OCI-LY7 (cell line): ENCODE measurements at regions of chr1 and their contacts with region 1.

Region 1: DNA sequence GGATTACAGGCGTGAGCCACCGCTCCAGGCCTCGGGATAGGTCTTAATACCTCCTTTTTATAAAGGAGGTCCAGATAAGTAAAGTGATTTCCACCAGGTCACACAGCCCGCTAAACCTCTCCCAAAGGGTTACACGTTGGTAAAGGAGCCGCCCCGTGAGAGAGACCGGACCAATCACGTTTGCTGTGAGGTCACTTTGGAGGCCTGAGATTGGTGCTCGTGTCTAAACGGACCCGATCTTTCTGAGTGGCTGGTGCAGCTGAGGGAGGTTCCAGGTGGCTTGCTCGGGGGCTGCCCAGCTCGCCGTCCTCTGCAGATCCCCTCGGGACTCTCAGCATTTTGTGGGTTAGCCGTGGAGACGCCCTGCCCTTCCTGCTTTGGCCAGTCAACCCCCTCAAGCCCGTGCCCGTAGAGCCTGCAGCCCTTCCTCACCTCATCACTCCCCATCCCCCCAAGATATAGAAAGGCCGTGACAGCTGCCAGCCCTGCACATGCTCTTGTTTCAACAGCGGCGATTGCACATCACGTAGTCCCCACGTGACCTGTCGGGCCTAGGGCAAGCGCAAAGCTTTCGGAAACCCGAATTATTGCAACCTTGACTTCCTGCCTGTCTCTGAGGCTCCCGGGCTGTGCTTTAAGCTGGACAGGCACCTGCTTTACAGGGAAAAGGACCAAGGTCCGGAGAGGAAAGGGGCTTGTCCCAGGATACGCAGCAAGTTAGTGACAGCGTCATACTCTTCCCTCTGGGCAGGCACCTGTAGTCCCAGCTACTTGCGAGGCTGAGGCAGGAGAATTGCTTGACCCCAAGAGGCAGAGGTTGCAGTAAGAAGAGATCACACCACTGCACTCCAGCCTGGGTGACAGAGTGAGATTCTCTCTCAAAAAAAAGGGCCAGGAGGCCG is 5.0 kb upstream of the COA7 start:
- DNase-seq: peak; percentile 89
- H3K4me3 ChIP-seq: peak overlapping the region; percentile 62
- H3K27ac ChIP-seq: no peak overlapping the region
- H3K4me1 ChIP-seq: peaks cover 20% of the 10 kb centered on the region
- CTCF ChIP-seq: no peak

Region 2: DNA sequence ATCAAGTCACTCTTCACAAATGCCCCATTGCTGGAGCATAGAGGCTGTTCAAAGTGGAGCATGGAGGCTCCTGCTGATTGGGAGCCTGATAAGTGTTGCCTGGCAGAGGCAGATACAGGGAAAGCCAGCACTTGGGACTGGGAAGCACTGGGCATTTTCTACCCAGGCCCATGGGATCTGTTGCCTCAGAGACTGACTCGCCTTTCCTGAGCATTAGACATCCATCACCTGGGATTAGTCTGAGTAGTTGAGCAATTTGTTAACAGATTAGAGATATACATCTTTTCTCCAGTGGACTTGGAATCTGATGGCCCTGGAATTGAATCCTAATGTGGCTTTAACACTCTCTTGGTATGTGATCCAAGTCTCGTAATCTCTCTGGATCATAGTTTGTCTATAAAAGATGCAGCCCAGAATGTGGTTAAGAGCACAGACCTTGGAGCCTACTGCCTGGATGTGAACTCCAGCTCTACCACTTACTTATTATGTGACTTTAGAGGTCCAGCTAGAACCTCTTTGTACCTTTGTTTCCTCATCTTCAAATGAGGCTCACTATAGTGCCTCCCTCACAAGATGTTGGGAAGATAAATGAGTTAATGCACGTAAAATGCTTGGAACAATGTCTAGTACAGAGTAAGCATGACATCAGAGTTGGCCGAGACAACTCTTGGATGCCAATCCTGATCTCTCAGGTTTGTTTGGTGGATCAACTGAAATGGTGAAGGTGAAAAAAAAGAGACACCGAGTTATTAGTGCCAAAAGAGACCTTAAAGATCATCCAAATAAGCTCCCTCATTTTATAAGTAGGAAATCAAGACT is 786.3 kb before region 1 on chr1:
- CTCF ChIA-PET with region 1: no interaction called
- POLR2A ChIA-PET with region 1: no interaction called
- intact Hi-C with region 1: no loop called
- DNase-seq: no peak
- H3K4me3 ChIP-seq: no peak overlapping the region
- H3K27ac ChIP-seq: no peak overlapping the region
- H3K4me1 ChIP-seq: no peaks in the 10 kb centered on the region
- CTCF ChIP-seq: no peak

Region 3: DNA sequence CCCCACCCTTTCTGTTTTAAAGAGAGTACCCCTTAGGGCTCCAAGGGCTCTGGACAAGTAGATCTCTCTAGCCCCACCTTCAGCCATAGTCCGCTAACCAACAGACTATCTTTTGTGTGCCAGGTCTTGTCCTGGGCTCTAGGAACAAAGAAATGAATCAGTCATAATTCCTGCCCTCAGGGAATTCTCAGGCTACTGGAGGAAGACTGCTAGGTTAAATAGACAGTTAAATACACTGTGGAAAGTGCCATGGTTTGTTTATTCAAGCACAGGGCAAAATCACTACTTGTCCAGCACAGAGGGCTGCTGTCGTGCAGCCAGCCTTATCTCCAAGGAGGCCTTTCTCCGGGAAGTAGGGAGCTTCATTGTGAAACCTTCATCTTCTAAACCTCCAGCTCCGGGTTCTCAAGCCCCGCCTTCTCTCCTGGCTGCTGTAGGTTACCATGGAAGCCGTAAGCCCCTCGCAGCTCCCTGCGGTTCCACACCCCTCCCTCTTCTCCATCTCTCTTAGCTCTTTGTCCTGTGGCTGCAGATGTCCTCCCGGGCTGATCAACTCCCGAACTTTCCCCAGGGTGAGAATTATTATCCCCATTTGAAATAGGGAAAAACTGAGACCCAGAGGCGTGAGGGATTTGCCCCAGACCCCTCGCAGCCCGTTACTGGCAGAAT is 40.4 kb before region 1 on chr1:
- CTCF ChIA-PET with region 1: no interaction called
- POLR2A ChIA-PET with region 1: no interaction called
- intact Hi-C with region 1: no loop called
- DNase-seq: no peak
- H3K4me3 ChIP-seq: no peak overlapping the region
- H3K27ac ChIP-seq: no peak overlapping the region
- H3K4me1 ChIP-seq: no peaks in the 10 kb centered on the region
- CTCF ChIP-seq: no peak

Region 4: GRCh38 chr1:52726265-52727113 is 23.4 kb after region 1 on chr1 and contains the start of gene ZYG11B:
- CTCF ChIA-PET with region 1: no interaction called
- POLR2A ChIA-PET with region 1: interaction called, 6 read pairs
- intact Hi-C with region 1: loop called (anchors 2 kb)
- DNase-seq: peak; percentile 91
- H3K4me3 ChIP-seq: peak within 1 kb of the TSS; percentile 82
- H3K27ac ChIP-seq: no peak within 1 kb of the TSS
- H3K4me1 ChIP-seq: peaks cover 16% of the 10 kb centered on the region
- CTCF ChIP-seq: no peak
- total RNA-seq, gene ZYG11B: 8.5 and 11.2 TPM in 2 replicates

Region 5: DNA sequence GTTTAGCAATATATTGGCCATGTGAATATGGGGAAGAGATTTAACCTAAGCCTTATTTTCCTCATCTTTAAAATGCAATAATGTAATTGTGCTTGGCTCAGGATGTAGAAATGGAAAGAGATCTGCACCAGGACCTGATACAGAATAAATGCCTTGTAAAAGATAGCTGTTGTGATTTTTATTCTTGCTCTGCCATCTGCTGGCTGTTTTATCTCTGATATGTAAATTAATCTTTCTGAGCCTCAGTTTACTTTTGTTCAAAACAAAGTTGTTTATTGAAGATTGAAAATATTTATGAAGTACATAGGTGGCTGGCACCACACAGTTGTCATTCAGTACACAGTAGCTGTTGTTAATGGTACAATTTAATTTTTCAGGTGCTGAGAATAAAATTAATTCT is 45.0 kb after region 1 on chr1:
- CTCF ChIA-PET with region 1: no interaction called
- POLR2A ChIA-PET with region 1: interaction called, 4 read pairs
- intact Hi-C with region 1: loop called (anchors 5 kb)
- DNase-seq: peak; percentile 16
- H3K4me3 ChIP-seq: no peak overlapping the region
- H3K27ac ChIP-seq: no peak overlapping the region
- H3K4me1 ChIP-seq: no peaks in the 10 kb centered on the region
- CTCF ChIP-seq: peak; percentile 74

Region 6: DNA sequence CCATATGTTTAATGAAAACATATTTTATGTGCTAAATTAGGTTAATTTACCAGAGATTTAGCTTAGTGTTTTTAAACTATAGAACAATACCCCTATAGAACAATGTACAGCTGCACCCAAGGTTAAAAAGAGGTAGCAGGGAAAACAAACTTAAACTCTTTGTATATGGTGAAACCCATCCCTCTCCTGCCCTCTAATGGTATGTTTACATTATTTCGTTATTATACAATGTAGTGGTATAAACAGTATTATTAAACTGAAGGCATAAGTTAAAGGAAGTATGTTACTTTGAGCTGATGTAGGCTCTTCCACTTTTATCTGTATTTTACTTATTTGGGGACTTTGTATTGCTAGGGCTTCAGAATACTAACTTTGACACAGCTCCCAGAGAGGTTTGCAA is 122.7 kb after region 1 on chr1:
- CTCF ChIA-PET with region 1: no interaction called
- POLR2A ChIA-PET with region 1: no interaction called
- intact Hi-C with region 1: loop called (anchors 2 kb)
- DNase-seq: peak; percentile 48
- H3K4me3 ChIP-seq: no peak overlapping the region
- H3K27ac ChIP-seq: no peak overlapping the region
- H3K4me1 ChIP-seq: no peaks in the 10 kb centered on the region
- CTCF ChIP-seq: peak; percentile 80

Region 7: GRCh38 chr1:53014791-53015507 is 311.8 kb after region 1 on chr1:
- CTCF ChIA-PET with region 1: no interaction called
- POLR2A ChIA-PET with region 1: no interaction called
- intact Hi-C with region 1: loop called (anchors 10 kb)
- DNase-seq: peak; percentile 95
- H3K4me3 ChIP-seq: peak overlapping the region; percentile 80
- H3K27ac ChIP-seq: peak overlapping the region; percentile 35
- H3K4me1 ChIP-seq: peaks cover 18% of the 10 kb centered on the region
- CTCF ChIP-seq: no peak

Region 8: GRCh38 chr1:53182111-53182593 is 479.0 kb after region 1 on chr1:
- CTCF ChIA-PET with region 1: no interaction called
- POLR2A ChIA-PET with region 1: no interaction called
- intact Hi-C with region 1: loop called (anchors 1 kb)
- DNase-seq: peak; percentile 82
- H3K4me3 ChIP-seq: no peak overlapping the region
- H3K27ac ChIP-seq: no peak overlapping the region
- H3K4me1 ChIP-seq: peaks cover 3% of the 10 kb centered on the region
- CTCF ChIP-seq: peak; percentile 97